Activated naive CD4-positive, alpha-beta T cell treated with anti-CD3 and anti-CD28 coated beads, Interleukin-2, amount 10 ng/mL, durations not matched to agents 7 days and 5 days (primary cell): ENCODE measurements at regions of chr12 and their contacts with region 1.

Region 1: DNA sequence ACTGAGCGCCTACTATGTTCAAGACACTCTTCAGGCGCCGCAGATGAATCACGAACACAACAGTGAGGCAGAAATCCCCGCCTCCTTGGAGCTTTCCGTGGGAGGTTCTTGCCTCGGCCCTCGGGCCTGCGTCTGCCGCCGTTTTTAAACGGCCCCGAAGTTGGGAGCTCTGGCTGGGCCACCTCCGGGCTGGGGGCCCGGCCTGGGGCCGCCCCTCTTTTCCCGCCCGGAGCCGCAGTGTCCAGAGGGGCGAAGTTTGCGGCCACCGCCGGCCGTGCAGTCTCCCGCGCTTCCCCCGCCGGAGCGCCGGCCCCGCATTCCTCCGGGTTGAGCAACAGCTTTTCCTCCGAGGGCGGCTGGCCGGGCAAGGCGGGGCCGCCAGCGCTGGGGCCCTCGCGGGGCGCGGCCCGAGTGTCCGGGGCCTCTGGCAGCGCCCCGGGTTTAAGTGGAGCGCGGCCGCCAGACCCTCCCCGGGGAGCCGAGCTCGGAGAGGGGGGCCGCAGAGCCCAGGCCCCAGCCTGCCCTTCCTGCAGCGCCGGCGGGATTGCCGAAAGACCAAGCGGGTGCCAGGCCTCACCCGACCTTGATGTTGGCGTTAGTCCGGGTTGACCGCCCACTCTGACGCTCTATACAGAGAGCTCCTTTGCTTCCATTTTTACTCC is 18.7 kb upstream of the CTDSP2 start:
- DNase-seq: peak; percentile 67
- H3K4me3 Mint-ChIP-seq: peak overlapping the region; percentile 68
- H3K27ac Mint-ChIP-seq: no peak overlapping the region
- H3K4me1 Mint-ChIP-seq: peaks cover 8% of the 10 kb centered on the region
- H3K27me3 Mint-ChIP-seq: peaks cover 53% of the 10 kb centered on the region

Region 2: DNA sequence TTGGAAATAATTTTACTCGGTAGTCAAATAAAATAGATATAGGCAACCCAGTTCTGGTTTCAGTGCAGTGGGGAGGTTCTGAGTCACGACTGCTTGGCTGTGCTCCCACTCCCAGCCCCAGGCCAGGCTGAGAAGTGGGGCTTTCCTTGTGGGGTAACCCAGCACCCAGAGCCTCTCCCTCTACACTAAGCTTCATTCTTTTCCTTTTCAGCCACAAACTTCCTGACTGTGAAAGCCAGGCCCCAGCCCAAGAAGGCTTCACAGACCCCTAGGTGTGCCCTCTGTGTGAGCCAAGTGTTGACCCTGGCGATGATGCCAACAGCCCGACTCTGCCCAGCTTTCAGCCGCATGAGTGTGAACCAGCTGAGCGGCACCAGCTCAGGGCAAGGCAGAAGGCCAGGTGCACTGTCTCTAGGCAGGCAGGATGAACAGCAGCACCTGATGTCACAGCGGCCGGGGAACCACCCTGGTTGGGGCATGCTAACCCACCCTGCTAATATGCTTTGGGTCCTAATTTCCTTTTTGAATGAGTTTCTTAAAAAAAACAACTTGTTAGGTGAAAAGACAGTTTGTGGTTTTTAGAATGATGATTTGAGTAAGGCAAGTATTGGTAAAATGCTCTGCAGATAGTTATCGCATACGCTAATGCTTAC is 33.9 kb after region 1 on chr12:
- CTCF ChIA-PET with region 1: interaction called, 16 read pairs
- DNase-seq: peak; percentile 76
- H3K4me3 Mint-ChIP-seq: peak overlapping the region; percentile 39
- H3K27ac Mint-ChIP-seq: peak overlapping the region; percentile 93
- H3K4me1 Mint-ChIP-seq: peaks cover 55% of the 10 kb centered on the region
- H3K27me3 Mint-ChIP-seq: peaks cover 14% of the 10 kb centered on the region

Region 3: DNA sequence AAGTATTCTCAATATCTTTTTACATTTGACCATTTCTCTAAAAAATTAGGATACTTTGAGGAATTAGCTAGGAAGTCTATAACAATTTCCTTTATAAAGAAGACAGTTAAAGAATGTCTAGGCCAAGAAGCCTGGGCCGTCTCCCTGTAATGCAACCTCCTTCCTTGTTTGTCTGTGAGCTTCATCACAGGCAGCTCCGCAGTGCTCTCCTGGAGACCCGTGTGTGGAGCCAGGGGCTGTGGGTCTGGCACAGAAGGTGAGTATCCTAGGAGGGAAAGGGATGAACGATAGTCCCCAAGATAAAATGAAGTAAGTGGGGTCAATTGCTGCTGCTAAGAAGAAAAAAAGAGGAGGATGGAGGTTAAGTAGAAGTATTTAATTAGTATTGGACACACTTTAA is 44.4 kb after region 1 on chr12:
- CTCF ChIA-PET with region 1: no interaction called
- DNase-seq: no peak
- H3K4me3 Mint-ChIP-seq: no peak overlapping the region
- H3K27ac Mint-ChIP-seq: no peak overlapping the region
- H3K4me1 Mint-ChIP-seq: peaks cover 6% of the 10 kb centered on the region
- H3K27me3 Mint-ChIP-seq: peaks cover 55% of the 10 kb centered on the region

Region 4: DNA sequence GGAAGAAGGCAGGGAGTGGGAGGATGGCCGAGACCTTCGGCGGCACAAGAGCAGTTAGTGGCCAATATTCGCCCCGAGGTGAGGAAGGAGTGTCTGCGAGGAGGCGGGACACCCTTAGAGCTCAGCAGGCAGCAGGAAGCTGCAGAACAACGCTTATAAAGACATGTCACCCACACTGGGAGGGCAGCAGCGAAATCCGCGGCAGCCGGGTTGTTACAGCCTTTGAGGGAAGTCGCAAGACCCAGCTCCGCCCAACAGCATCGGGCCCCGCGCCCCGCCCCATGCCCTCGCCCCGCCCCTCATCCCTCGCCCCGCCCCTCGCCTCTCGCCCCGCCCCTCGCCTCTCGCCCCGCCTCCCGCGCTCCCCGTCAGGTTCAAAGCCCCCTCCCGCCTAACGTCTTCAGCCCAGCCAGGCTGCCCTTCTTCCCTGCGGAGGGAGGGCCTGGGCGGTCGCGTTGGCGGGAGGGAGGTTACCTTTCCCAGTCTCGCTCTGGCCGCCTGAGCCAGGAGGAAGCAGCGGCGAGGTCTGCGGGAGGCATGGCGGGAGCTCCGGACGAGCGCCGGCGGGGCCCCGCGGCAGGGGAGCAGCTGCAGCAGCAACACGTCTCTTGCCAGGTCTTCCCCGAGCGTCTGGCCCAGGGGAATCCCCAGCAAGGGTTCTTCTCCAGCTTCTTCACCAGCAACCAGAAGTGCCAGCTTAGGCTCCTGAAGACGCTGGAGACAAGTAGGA is 76.1 kb after region 1 on chr12 and contains the start of gene ATP23:
- CTCF ChIA-PET with region 1: no interaction called
- DNase-seq: peak; percentile 94
- H3K4me3 Mint-ChIP-seq: peak within 1 kb of the TSS; percentile 89
- H3K27ac Mint-ChIP-seq: peak within 1 kb of the TSS; percentile 99
- H3K4me1 Mint-ChIP-seq: peaks cover 54% of the 10 kb centered on the region
- H3K27me3 Mint-ChIP-seq: no peaks in the 10 kb centered on the region